ENCODE measurements at regions of chr17 and their contacts with region 1.

Region 1: GRCh38 chr17:47840740-47841603 is at the start of gene SCRN2:
- DNase-seq: peak; percentile 92 to 93
- ATAC-seq: peak; percentile 79 to 90
- H3K4me3 ChIP-seq: peak within 1 kb of the TSS; percentile 85
- H3K27ac ChIP-seq: peak within 1 kb of the TSS; percentile 90 to 92
- H3K4me1 ChIP-seq: peaks cover 25% of the 10 kb centered on the region
- CTCF ChIP-seq: peak; percentile 98
- EP300 ChIP-seq: no peak
- POLR2A ChIP-seq: peak; percentile 49
- RAD21 ChIP-seq: peak; percentile 99 to 100
- polyA plus RNA-seq, gene SCRN2: 20.7 and 25.8 TPM in 2 replicates

Region 2: DNA sequence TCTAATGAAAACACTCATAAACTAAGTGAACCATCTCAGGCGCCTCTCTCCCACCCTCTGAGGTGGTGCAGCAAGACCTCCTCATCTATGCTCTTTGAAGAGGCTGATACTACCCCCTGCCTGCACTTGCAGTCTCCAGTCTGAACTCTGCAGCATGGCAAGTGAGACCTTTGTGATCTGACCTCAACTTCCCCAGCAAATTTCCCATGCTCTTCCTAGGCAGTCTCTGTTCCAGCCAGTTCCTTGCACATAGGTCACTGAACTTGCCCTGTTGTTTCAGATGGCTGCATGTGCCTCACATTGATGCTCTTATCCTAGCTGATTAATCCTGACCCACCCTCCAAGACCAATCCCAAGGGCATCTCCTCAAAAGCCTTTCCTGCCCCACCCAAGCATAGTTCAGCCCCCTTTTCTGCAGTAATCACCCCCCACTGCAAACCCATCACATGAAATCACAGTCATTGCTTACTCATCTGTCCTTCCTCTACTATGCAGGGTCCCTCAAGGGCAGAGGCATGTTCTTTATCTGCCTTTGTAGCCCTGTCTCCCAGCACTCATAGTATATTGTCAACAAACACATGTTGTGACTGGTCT is 65.9 kb before region 1 on chr17:
- CTCF ChIA-PET with region 1: no interaction called
- POLR2A ChIA-PET with region 1: no interaction called
- DNase-seq: no peak
- ATAC-seq: no peak
- H3K4me3 ChIP-seq: no peak overlapping the region
- H3K27ac ChIP-seq: no peak overlapping the region
- H3K4me1 ChIP-seq: no peaks in the 10 kb centered on the region
- CTCF ChIP-seq: no peak
- EP300 ChIP-seq: no peak
- POLR2A ChIP-seq: no peak
- RAD21 ChIP-seq: no peak

Region 3: GRCh38 chr17:47821424-47822391 is 19.3 kb before region 1 on chr17 and contains the start of gene OSBPL7:
- CTCF ChIA-PET with region 1: interaction called, 79 read pairs
- POLR2A ChIA-PET with region 1: interaction called, 3 read pairs
- DNase-seq: peak; percentile 74 to 79
- ATAC-seq: peak; percentile 80 to 92
- H3K4me3 ChIP-seq: peak within 1 kb of the TSS; percentile 77
- H3K27ac ChIP-seq: peak within 1 kb of the TSS; percentile 77 to 85
- H3K4me1 ChIP-seq: peaks cover 21% of the 10 kb centered on the region
- CTCF ChIP-seq: peak; percentile 58
- EP300 ChIP-seq: no peak
- POLR2A ChIP-seq: peak; percentile 81
- RAD21 ChIP-seq: no peak
- polyA plus RNA-seq, gene OSBPL7: 7.0 and 7.1 TPM in 2 replicates

Region 4: GRCh38 chr17:47889734-47890529 is 49.0 kb after region 1 on chr17:
- CTCF ChIA-PET with region 1: interaction called, 1,860 read pairs
- POLR2A ChIA-PET with region 1: interaction called, 20 read pairs
- DNase-seq: peak; percentile 85 to 90
- ATAC-seq: peak; percentile 95 to 98
- H3K4me3 ChIP-seq: no peak overlapping the region
- H3K27ac ChIP-seq: no peak overlapping the region
- H3K4me1 ChIP-seq: peaks cover 23% of the 10 kb centered on the region; the same call in 2 of the 3 replicates
- CTCF ChIP-seq: peak; percentile 99
- EP300 ChIP-seq: no peak
- POLR2A ChIP-seq: no peak
- RAD21 ChIP-seq: peak; percentile 100

Region 5: GRCh38 chr17:47905221-47905781 is 64.3 kb after region 1 on chr17:
- CTCF ChIA-PET with region 1: interaction called, 89 read pairs
- POLR2A ChIA-PET with region 1: no interaction called
- DNase-seq: no peak
- ATAC-seq: peak; percentile 49 to 61; a peak in 4 of 6 replicates
- H3K4me3 ChIP-seq: no peak overlapping the region
- H3K27ac ChIP-seq: peak overlapping the region in 1 of 2 experiments; percentile 24; a peak in 3 of 6 replicates
- H3K4me1 ChIP-seq: peaks cover 13% of the 10 kb centered on the region
- CTCF ChIP-seq: no peak
- EP300 ChIP-seq: no peak
- POLR2A ChIP-seq: no peak
- RAD21 ChIP-seq: no peak

Region 6: GRCh38 chr17:47929218-47930000 is 88.4 kb after region 1 on chr17:
- CTCF ChIA-PET with region 1: interaction called, 10 read pairs
- POLR2A ChIA-PET with region 1: no interaction called
- DNase-seq: no peak
- ATAC-seq: no peak; a peak in 1 of 6 replicates
- H3K4me3 ChIP-seq: no peak overlapping the region
- H3K27ac ChIP-seq: peak overlapping the region in 1 of 2 experiments; percentile 4; a peak in 1 of 6 replicates
- H3K4me1 ChIP-seq: peaks cover 2% of the 10 kb centered on the region; the same call in 1 of the 3 replicates
- CTCF ChIP-seq: no peak
- EP300 ChIP-seq: no peak
- POLR2A ChIP-seq: no peak
- RAD21 ChIP-seq: no peak

Region 7: DNA sequence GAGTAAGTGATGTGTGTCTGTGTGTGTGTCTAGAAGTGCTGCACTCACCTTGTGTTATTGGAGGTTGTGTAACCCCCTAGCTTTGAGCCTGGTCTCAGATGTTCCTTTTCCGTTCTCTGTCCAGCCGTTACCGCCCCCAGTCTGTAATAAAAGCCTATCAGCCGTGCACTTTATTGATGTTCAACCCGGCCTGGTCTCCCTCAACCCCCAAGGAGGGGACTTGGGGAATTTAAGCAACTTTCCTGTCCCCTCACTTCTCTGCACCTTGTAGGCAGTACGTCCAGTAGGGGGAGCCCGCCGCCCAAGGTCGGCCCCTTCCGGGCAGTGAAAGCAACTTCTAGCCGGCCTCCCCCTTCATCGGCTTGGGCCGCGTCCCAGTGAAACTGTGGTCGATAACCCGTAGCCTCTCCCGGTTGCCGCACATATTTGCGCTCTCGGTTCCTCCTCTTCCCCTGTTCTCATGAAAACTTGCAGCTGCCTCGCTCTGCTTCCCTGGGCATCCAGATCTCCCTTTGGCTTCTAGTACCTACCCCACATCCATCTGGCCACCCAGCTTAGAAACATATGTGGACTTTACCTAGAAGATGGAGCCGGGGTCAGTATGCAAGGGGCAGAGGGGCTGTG is 108.3 kb after region 1 on chr17:
- CTCF ChIA-PET with region 1: interaction called, 86 read pairs
- POLR2A ChIA-PET with region 1: no interaction called
- DNase-seq: peak; percentile 80 to 85
- ATAC-seq: peak; percentile 71 to 88
- H3K4me3 ChIP-seq: peak overlapping the region; percentile 5; the same call in 1 of the 3 replicates
- H3K27ac ChIP-seq: peak overlapping the region; percentile 77 to 87
- H3K4me1 ChIP-seq: peaks cover 48% of the 10 kb centered on the region
- CTCF ChIP-seq: peak; percentile 99
- EP300 ChIP-seq: no peak
- POLR2A ChIP-seq: no peak
- RAD21 ChIP-seq: peak; percentile 96 to 97

Region 8: DNA sequence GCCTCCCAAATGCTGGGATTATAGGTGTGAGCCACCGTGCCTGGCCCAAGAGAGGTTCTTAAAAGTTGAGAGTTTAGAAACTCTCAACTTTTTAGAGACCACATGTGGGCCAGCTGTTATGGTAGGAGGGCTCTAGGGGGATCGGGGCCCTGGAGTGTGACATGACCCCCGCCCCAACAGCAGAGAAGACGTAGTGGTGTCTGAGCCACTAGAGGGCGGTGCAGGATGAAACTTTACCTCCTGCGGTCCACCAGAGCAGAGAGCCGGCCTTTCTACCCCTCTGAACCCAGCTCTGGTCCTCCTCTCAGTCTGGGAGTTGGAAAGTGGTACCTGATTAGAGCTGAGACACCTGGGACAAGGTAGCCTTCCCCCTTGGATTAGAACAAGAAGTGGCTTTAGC is 137.4 kb after region 1 on chr17:
- CTCF ChIA-PET with region 1: interaction called, 21 read pairs
- POLR2A ChIA-PET with region 1: no interaction called
- DNase-seq: peak; percentile 63 to 93
- ATAC-seq: peak; percentile 82 to 95
- H3K4me3 ChIP-seq: no peak overlapping the region
- H3K27ac ChIP-seq: no peak overlapping the region
- H3K4me1 ChIP-seq: no peaks in the 10 kb centered on the region
- CTCF ChIP-seq: peak; percentile 82
- EP300 ChIP-seq: no peak
- POLR2A ChIP-seq: no peak
- RAD21 ChIP-seq: peak; percentile 80 to 83